CD4-positive, alpha-beta T cell (primary cell): ENCODE measurements at regions of chr22 and their contacts with region 1.

Region 1: GRCh38 chr22:26483439-26484359 is at the starts of genes HPS4 and SRRD:
- DNase-seq: peak; percentile 86 to 98 (median 91)
- ATAC-seq: peak; percentile 79
- H3K4me3 ChIP-seq: peak within 1 kb of the TSS; percentile 76
- H3K4me3 Mint-ChIP-seq: peak within 1 kb of the TSS; percentile 97
- H3K27ac ChIP-seq: peak within 1 kb of the TSS; percentile 86 to 92
- H3K27ac Mint-ChIP-seq: peak within 1 kb of the TSS; percentile 94
- H3K4me1 ChIP-seq: peaks cover 57% of the 10 kb centered on the region
- H3K4me1 Mint-ChIP-seq: peaks cover 73% of the 10 kb centered on the region
- H3K27me3 ChIP-seq: no peaks in the 10 kb centered on the region
- H3K27me3 Mint-ChIP-seq: no peaks in the 10 kb centered on the region
- CTCF ChIP-seq: no peak
- total RNA-seq, gene HPS4: 61.6 to 67.0 TPM
- total RNA-seq, gene SRRD: 25.8 to 27.2 TPM

Region 2: DNA sequence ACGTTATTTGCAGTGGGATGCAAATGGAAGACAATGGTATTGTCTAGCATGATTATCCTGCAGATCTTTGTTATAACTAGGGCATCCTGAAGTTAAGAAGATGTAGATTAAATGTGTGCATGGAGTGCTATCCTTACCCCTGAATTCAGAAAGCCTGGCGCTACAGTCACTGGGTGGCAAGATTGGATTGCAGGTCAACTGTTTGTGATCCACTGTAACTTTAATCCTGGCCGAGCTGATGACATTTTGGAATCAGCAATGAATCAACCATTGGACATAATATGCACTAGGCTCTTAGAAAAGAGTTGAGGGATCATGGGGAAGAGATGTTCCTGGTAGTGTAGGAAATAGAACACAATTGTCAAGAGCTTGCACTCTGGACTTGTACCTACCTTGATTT is 289.4 kb before region 1 on chr22:
- CTCF ChIA-PET with region 1: no interaction called
- POLR2A ChIA-PET with region 1: no interaction called
- intact Hi-C with region 1: no loop called
- DNase-seq: no peak
- ATAC-seq: no peak
- H3K4me3 ChIP-seq: no peak overlapping the region
- H3K4me3 Mint-ChIP-seq: no peak overlapping the region
- H3K27ac ChIP-seq: no peak overlapping the region
- H3K27ac Mint-ChIP-seq: no peak overlapping the region
- H3K4me1 ChIP-seq: no peaks in the 10 kb centered on the region
- H3K4me1 Mint-ChIP-seq: no peaks in the 10 kb centered on the region
- H3K27me3 ChIP-seq: peaks cover 0 to 4% of the 10 kb centered on the region in 2 experiments
- H3K27me3 Mint-ChIP-seq: peaks cover 33% of the 10 kb centered on the region
- CTCF ChIP-seq: no peak

Region 3: GRCh38 chr22:26494506-26494905 is 10.8 kb after region 1 on chr22:
- CTCF ChIA-PET with region 1: no interaction called
- POLR2A ChIA-PET with region 1: interaction called, 22 read pairs
- intact Hi-C with region 1: no loop called
- DNase-seq: no peak
- ATAC-seq: no peak
- H3K4me3 ChIP-seq: no peak overlapping the region
- H3K4me3 Mint-ChIP-seq: no peak overlapping the region
- H3K27ac ChIP-seq: no peak overlapping the region
- H3K27ac Mint-ChIP-seq: no peak overlapping the region
- H3K4me1 ChIP-seq: no peaks in the 10 kb centered on the region
- H3K4me1 Mint-ChIP-seq: no peaks in the 10 kb centered on the region
- H3K27me3 ChIP-seq: no peaks in the 10 kb centered on the region
- H3K27me3 Mint-ChIP-seq: no peaks in the 10 kb centered on the region
- CTCF ChIP-seq: no peak

Region 4: GRCh38 chr22:26511857-26512793 is 28.4 kb after region 1 on chr22 and contains the start of gene TFIP11:
- CTCF ChIA-PET with region 1: interaction called, 5 read pairs
- POLR2A ChIA-PET with region 1: interaction called, 54 read pairs
- intact Hi-C with region 1: loop called in 1 of 2 experiments (anchors 1 kb)
- DNase-seq: peak; percentile 80 to 94 (median 88)
- ATAC-seq: peak; percentile 89
- H3K4me3 ChIP-seq: peak within 1 kb of the TSS; percentile 99
- H3K4me3 Mint-ChIP-seq: peak within 1 kb of the TSS; percentile 98
- H3K27ac ChIP-seq: peak within 1 kb of the TSS; percentile 71 to 91
- H3K27ac Mint-ChIP-seq: peak within 1 kb of the TSS; percentile 95
- H3K4me1 ChIP-seq: peaks cover 22% of the 10 kb centered on the region
- H3K4me1 Mint-ChIP-seq: peaks cover 46% of the 10 kb centered on the region
- H3K27me3 ChIP-seq: no peaks in the 10 kb centered on the region
- H3K27me3 Mint-ChIP-seq: no peaks in the 10 kb centered on the region
- CTCF ChIP-seq: no peak
- total RNA-seq, gene TFIP11: 111 TPM

Region 5: DNA sequence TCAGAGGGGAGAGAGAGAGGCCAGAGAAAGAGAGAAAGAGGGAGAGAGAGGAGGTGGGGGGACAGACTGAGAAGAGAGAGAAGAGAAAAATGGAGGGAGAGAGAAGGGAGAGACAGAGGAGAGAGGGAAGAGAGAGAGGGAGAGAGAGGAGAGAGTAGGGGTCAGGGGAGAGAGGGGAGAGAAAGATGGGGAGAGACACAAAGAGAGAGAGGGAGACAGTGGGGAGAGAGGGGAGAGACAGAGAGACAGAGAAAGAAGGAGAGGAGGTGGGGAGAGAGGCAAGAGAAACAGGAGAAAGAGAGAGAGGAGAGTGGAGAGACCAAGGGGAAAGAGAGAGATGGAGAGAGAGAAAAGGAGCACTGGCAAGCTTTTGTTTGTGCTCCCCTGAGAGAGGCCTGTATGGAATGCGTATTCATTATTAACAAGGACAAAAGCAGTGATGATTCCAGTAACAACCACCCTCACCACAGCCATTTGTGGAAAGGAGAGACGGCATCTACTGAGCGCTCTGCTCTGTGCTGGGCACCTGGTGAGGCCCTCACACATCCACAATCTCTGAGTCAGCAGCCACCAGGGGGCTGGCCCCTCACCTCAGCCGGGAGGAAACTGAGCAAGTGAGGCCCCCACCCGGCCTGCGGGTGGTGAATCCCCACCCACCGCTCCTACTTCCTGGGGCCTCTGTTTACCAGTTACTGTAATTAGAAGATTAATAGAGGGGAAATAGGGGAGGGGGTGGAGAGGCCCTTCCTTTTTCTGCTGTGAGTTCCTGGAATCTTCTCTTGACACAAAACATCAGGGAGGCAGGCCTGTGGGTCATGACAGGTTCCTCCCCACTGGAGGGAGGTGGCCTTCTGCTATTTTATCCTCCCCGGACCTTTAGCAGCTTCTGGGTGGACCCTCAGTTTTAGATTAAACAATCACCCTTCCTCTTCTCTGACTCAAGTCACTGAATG is 159.0 kb after region 1 on chr22:
- CTCF ChIA-PET with region 1: no interaction called
- POLR2A ChIA-PET with region 1: interaction called, 17 read pairs
- intact Hi-C with region 1: no loop called
- DNase-seq: peak in 13 of 14 experiments; percentile 25 to 90 (median 69)
- ATAC-seq: peak; percentile 51
- H3K4me3 ChIP-seq: peak overlapping the region; percentile 10
- H3K4me3 Mint-ChIP-seq: no peak overlapping the region
- H3K27ac ChIP-seq: peak overlapping the region; percentile 45 to 77
- H3K27ac Mint-ChIP-seq: peak overlapping the region; percentile 76
- H3K4me1 ChIP-seq: peaks cover 62% of the 10 kb centered on the region
- H3K4me1 Mint-ChIP-seq: peaks cover 56% of the 10 kb centered on the region
- H3K27me3 ChIP-seq: no peaks in the 10 kb centered on the region
- H3K27me3 Mint-ChIP-seq: no peaks in the 10 kb centered on the region
- CTCF ChIP-seq: peak; percentile 58